Tibial artery (tissue), 4 donors: ENCODE measurements at regions of chr7 and their contacts with region 1.

Region 1: GRCh38 chr7:151368136-151368571 is 26.5 kb downstream of the NUB1 start:
- DNase-seq: peak; percentile 78 to 88
- H3K4me3 ChIP-seq: no peak overlapping the region
- H3K27ac ChIP-seq: no peak overlapping the region
- H3K4me1 ChIP-seq: peaks cover 0 to 41% (median 29%) of the 10 kb centered on the region in 4 donors
- H3K27me3 ChIP-seq: no peaks in the 10 kb centered on the region
- CTCF ChIP-seq: peak; percentile 96 to 98

Region 2: GRCh38 chr7:151185762-151186631 is 182.2 kb before region 1 on chr7:
- intact Hi-C with region 1: no loop called
- DNase-seq: peak in 1 of 2 donors; percentile 12
- H3K4me3 ChIP-seq: no peak overlapping the region
- H3K27ac ChIP-seq: no peak overlapping the region
- H3K4me1 ChIP-seq: no peaks in the 10 kb centered on the region
- H3K27me3 ChIP-seq: peaks cover 0 to 31% of the 10 kb centered on the region in 2 donors
- CTCF ChIP-seq: no peak

Region 3: GRCh38 chr7:151410405-151411390 is 42.5 kb after region 1 on chr7:
- intact Hi-C with region 1: loop called (anchors 5 kb)
- DNase-seq: no peak
- H3K4me3 ChIP-seq: peak overlapping the region; percentile 35 to 46
- H3K27ac ChIP-seq: no peak overlapping the region
- H3K4me1 ChIP-seq: peaks cover 0 to 24% (median 19%) of the 10 kb centered on the region in 4 donors
- H3K27me3 ChIP-seq: peaks cover 4 to 56% of the 10 kb centered on the region in 2 donors
- CTCF ChIP-seq: no peak

Region 4: DNA sequence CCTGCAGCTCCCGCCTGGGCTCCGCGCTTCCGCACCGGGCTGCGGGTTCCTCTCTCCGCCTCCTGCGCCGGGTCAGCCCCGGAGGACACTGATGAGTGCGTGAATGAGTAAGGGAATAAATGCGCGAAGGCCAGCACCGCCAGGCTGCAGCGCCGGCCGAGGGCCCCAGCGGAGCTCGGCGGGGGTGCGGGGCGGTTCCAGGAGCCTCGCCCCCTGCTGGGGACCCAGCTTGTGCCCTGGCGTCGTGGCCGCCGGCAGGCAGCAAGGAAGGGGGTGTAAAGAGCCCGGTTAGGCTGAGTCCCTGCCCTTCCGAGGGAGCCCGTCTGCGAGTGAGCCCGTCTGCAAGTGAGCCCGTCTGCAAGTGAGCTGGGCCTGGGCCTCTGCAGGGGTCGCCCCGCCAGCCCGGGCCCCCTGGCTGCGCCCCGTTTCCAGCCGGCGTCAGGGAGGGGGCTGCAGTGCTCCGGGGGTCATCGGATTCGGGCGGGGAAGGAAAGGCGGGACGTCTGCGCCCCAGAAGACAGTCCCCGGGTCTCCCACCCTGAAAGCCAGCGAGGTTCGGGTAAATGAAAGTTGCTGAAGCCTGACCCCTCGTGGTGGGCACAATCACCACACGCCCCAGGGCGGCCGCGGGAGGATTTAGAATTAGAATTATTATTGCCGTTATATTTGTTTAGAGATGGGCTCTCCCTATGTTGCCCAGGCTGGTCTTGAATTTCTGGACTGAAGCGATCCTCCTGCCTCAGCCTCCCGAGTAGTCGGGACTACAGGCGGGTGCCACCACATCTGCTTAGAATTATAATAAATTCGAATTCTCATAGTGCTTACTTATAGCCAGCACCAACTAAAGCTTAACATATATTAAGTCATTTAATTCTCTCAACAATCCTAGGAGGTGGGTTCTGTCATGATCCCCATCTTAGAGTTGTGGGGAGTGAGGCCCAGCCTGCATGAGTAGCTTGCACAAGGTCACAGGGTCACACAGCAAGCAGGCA is 80.4 kb after region 1 on chr7:
- intact Hi-C with region 1: loop called (anchors 2 kb)
- DNase-seq: peak; percentile 68 to 83
- H3K4me3 ChIP-seq: peak overlapping the region; percentile 56 to 63
- H3K27ac ChIP-seq: peak overlapping the region; percentile 47 to 71
- H3K4me1 ChIP-seq: peaks cover 0 to 9% (median 4%) of the 10 kb centered on the region in 4 donors
- H3K27me3 ChIP-seq: no peaks in the 10 kb centered on the region
- CTCF ChIP-seq: peak; percentile 78 to 80